ENCODE measurements at regions of chr9 and their contacts with region 1.

Region 1: DNA sequence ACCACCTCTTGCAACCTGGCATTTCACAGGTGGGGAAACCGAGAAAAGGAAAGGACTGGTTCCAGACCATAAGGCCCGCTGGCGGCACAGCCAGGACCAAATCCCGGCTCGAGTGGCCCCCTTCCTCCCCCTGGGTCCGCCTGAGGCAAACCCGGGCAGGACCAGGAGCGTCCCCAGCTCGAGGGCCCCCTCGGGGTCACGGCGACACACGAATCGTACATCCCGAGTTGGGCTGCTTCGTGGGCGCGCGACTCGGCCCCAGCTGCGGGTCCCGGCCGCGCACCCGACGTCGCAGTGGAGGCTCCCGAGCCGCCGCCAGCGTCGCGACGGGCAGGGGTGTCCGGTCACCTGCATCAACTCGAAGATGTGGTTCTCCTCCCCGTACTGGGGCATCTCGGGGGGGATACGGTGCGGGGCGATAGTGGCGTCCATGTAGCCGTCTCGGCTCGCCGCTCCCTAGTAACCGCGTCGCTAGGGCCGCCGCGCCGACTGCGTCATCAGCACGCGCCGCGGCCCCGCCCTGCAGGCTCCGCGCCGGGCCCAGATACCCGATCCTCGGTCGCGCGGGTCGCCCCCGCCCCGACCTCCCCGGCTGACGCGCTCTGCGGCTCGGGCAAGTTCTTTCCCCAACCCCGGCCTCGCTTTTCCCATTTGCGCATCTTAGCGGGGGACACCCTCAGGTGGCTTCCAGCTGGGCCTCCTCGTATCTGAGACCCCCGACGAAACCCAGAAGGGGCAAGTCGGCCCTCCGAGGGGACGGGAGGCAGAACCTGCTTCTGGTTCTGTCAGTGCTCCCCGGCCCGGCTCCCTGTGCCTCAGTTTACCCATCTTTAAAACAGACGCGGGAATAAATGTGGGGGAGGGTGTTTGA is at the start of gene AK8:
- DNase-seq: peak; percentile 58 to 78
- H3K4me3 ChIP-seq: peak within 1 kb of the TSS; percentile 63 to 75
- H3K27ac ChIP-seq: peak within 1 kb of the TSS; percentile 70 to 80
- H3K4me1 ChIP-seq: peaks cover 0 to 14% (median 9%) of the 10 kb centered on the region in 4 donors
- H3K27me3 ChIP-seq: no peaks in the 10 kb centered on the region
- CTCF ChIP-seq: no peak

Region 2: DNA sequence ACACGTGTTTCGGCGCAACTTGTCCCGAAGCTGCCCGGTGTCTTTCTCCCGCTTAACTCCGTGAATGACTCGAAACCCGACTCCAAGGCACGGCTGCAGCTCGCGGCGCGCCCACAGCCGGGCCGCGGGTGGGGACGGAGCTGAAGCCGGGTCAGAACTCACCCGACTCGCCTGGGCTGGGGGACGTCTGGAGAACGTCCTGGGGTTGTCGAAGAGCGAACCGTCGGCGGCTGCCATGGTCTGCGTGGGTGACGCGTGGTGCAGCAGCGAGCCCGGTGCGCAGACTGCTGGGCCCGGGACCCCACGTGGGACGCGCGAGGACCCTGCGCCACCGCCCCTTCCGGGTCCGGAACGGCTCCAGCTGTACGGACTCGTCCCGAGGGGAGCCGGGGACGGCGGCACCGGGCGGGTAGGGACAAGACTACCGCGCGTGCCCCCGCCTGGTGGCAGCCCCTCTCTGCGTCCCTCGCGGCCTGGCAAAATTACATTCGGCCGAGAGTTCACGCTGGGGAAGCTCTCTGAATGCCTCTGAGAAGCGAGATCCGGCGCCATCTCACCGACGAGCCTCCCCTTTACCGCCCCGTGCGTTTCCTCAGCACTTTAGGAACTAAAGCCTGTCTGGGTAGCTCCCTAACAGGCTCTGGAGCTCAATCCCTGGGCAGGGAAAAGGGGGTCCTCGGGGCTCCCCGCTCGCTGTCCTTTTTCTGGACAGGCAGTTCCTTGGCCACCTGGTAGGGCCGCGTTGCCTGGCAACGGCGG is 208.2 kb before region 1 on chr9 and contains the start of gene DDX31:
- intact Hi-C with region 1: loop called (anchors 10 kb)
- DNase-seq: peak; percentile 85 to 91
- H3K4me3 ChIP-seq: peak within 1 kb of the TSS; percentile 94 to 96
- H3K27ac ChIP-seq: peak within 1 kb of the TSS; percentile 95 to 96
- H3K4me1 ChIP-seq: peaks cover 0 to 48% (median 22%) of the 10 kb centered on the region in 4 donors
- H3K27me3 ChIP-seq: no peaks in the 10 kb centered on the region
- CTCF ChIP-seq: no peak

Region 3: DNA sequence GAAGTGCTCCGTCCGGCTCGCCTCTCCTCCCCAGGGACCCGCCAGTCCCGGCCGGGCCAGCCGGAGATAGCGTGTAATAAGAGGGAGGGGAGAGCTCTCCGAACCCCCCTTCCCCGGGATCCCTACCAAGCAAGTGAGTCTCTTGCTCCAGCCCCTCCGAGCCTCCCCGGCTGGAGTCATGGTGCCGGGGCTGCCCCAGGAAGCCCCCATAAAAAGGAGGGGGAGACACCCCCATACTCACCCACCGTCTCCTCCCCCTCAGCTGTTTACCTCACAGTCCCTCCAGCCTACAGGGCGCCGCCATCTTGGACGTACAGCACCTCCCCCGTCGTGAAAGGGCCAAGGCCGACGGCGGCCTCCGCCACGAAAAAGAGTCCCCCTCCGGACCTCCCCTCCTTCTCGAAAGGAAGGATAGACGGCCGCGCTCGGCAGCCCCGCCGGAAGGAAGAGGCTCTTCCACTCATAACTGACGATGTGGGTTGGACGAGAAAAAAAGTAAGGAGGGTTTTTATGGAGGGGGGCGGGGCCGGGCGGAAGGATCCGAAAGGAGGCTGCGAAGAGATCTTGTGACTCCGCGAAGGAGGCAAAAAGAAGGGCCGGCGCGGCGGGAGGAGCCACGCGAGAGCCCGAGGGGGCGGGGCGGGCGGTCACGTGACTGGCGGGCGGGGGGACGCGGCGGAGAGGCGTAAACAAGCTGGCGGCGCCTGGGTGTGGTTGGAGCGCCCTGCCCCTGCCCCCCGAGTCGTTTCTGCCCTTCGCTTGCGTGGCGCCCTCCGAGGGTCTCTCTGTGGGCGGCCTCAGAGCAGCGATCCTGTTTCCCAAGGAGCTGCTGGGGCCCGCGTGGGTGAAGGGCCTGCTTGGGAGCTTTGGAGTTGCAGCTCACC is 66.5 kb after region 1 on chr9 and contains the start of gene TSC1:
- intact Hi-C with region 1: loop called (anchors 10 kb)
- DNase-seq: peak; percentile 94 to 98
- H3K4me3 ChIP-seq: peak within 1 kb of the TSS; percentile 88 to 99
- H3K27ac ChIP-seq: peak within 1 kb of the TSS; percentile 94 to 95
- H3K4me1 ChIP-seq: peaks cover 0 to 22% (median 18%) of the 10 kb centered on the region in 4 donors
- H3K27me3 ChIP-seq: no peaks in the 10 kb centered on the region
- CTCF ChIP-seq: no peak

Region 4: GRCh38 chr9:133210202-133210532 is 332.1 kb after region 1 on chr9:
- intact Hi-C with region 1: no loop called
- DNase-seq: no peak
- H3K4me3 ChIP-seq: no peak overlapping the region
- H3K27ac ChIP-seq: no peak overlapping the region
- H3K4me1 ChIP-seq: no peaks in the 10 kb centered on the region
- H3K27me3 ChIP-seq: peaks cover 0 to 31% of the 10 kb centered on the region in 2 donors
- CTCF ChIP-seq: no peak

Measured in tibial artery (tissue), 4 donors.